Calu3 (cell line): ENCODE measurements at regions of chr6 and their contacts with region 1.

Region 1: DNA sequence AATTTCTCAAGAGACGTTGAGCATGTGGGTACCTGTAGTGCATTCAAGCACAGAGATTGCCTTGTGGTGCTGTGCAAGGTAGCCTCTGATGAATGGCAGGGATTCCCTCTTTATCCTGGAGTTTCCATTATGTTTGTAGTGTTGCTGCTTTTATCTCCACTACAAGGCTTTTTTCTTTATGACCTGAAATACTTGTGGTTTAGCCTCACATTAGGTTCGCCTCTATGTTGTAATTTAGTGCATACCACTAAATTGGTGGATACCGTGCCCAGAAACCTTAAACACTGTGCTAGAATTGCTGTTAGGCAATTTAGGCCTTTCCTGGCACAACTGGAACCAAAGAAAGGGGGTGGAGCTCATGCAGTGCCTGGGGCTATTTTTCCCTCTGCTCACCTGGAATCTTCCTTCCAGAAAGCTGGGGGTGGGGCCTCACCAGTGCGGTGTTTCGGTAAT is 76.7 kb downstream of the NCOA7 start:
- DNase-seq: peak; percentile 69
- H3K4me3 Mint-ChIP-seq: no peak overlapping the region
- H3K27ac Mint-ChIP-seq: no peak overlapping the region
- H3K4me1 Mint-ChIP-seq: peaks cover 34% of the 10 kb centered on the region
- H3K27me3 Mint-ChIP-seq: no peaks in the 10 kb centered on the region
- CTCF ChIP-seq: no peak

Region 2: GRCh38 chr6:125790358-125791150 is 77.0 kb before region 1 on chr6 and contains the start of gene NCOA7:
- CTCF ChIA-PET with region 1: interaction called, 3 read pairs
- intact Hi-C with region 1: loop called (anchors 5 kb)
- DNase-seq: peak; percentile 68
- H3K4me3 Mint-ChIP-seq: peak within 1 kb of the TSS; percentile 78
- H3K27ac Mint-ChIP-seq: peak within 1 kb of the TSS; percentile 54
- H3K4me1 Mint-ChIP-seq: peaks cover 23% of the 10 kb centered on the region
- H3K27me3 Mint-ChIP-seq: no peaks in the 10 kb centered on the region
- CTCF ChIP-seq: no peak
- total RNA-seq, gene NCOA7: 97.1 and 102 TPM in 2 replicates

Region 3: GRCh38 chr6:125904871-125905270 is 37.4 kb after region 1 on chr6:
- CTCF ChIA-PET with region 1: interaction called, 4 read pairs
- intact Hi-C with region 1: loop called (anchors 5 kb)
- DNase-seq: no peak
- H3K4me3 Mint-ChIP-seq: no peak overlapping the region
- H3K27ac Mint-ChIP-seq: no peak overlapping the region
- H3K4me1 Mint-ChIP-seq: peaks cover 38% of the 10 kb centered on the region
- H3K27me3 Mint-ChIP-seq: no peaks in the 10 kb centered on the region
- CTCF ChIP-seq: no peak

Region 4: GRCh38 chr6:125944434-125944816 is 76.9 kb after region 1 on chr6:
- CTCF ChIA-PET with region 1: no interaction called
- intact Hi-C with region 1: loop called (anchors 5 kb)
- DNase-seq: peak; percentile 59
- H3K4me3 Mint-ChIP-seq: no peak overlapping the region
- H3K27ac Mint-ChIP-seq: peak overlapping the region; percentile 95
- H3K4me1 Mint-ChIP-seq: peaks cover 53% of the 10 kb centered on the region
- H3K27me3 Mint-ChIP-seq: no peaks in the 10 kb centered on the region
- CTCF ChIP-seq: no peak